ENCODE measurements at regions of chr3 and their contacts with region 1.

Region 1: GRCh38 chr3:181709537-181710279 is 2.0 kb upstream of the SOX2 start:
- DNase-seq: no peak
- H3K4me3 ChIP-seq: peak overlapping the region; percentile 16
- CTCF ChIP-seq: peak; percentile 68

Region 2: DNA sequence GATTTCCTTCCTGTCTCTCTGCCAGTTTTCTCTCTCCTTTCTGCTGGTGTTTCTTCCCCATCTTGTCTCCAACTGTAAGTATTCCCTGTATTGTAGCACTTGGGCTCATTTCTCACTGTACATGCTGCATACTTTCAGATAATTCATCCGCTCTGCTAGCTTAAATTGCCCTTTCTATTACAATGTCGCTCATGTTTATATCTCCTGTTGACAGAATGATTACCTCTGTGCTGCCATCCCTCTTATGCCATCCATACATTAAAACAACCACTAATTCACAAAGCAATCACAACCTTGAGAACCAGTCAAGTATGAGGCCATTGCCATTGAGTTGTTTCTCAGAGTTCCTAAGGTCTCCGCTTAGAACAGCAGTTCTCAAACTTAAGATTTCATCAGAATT is 105.4 kb before region 1 on chr3:
- in situ Hi-C with region 1: no loop called
- DNase-seq: no peak
- H3K4me3 ChIP-seq: no peak overlapping the region
- CTCF ChIP-seq: no peak

Region 3: GRCh38 chr3:182261041-182261440 is 551.3 kb after region 1 on chr3:
- in situ Hi-C with region 1: loop called (anchors 5 kb)
- DNase-seq: no peak
- H3K4me3 ChIP-seq: no peak overlapping the region
- CTCF ChIP-seq: no peak

Measured in astrocyte of the cerebellum (primary cell).